ENCODE measurements at regions of chr9 and their contacts with region 1.

Region 1: DNA sequence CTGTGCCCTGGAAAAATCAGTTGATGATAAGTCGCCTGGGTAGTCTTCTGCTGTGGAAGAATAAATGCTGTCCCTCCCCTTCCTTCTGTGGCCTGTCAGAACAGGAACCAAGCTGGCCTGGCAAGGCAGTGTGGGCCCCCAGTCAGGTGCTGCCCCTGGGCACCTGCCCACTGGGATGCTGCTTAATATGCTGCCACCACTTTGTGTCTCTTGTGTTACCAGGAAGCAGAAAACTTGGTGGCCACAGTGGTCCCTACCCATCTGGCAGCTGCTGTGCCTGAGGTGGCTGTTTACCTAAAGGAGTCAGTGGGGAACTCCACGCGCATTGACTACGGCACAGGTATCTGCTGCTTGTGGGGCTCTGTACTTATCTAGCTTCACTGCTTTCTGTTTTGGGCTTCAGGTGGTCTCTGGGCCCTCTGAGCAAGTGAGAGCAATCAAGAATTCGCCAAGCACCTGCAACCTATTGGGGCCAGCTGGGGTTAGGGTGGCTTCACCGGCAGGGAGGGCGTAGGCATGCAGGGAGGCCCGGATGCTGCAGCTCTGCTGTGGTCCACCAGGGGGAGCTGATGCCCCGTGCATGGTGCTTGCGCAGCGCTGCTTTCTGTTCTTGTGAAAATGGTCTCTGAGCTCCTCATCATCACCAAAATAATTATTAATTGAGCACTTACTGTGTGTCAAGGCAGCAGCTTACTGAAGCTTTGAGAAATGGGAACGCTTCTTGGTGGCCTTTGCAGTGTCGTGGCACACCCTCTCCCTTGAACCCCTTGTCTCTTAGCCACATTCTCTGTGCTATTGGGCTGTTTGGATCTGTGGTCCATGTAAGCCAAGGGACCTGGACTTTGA is 20.3 kb downstream of the PTPA start:
- DNase-seq: peak; percentile 81
- H3K4me3 Mint-ChIP-seq: no peak overlapping the region
- H3K27ac Mint-ChIP-seq: no peak overlapping the region
- H3K4me1 Mint-ChIP-seq: no peaks in the 10 kb centered on the region
- H3K27me3 Mint-ChIP-seq: no peaks in the 10 kb centered on the region
- CTCF ChIP-seq: peak; percentile 94

Region 2: GRCh38 chr9:128742401-128742800 is 389.1 kb before region 1 on chr9:
- CTCF ChIA-PET with region 1: no interaction called
- intact Hi-C with region 1: no loop called
- DNase-seq: no peak
- H3K4me3 Mint-ChIP-seq: no peak overlapping the region
- H3K27ac Mint-ChIP-seq: no peak overlapping the region
- H3K4me1 Mint-ChIP-seq: no peaks in the 10 kb centered on the region
- H3K27me3 Mint-ChIP-seq: no peaks in the 10 kb centered on the region
- CTCF ChIP-seq: no peak

Region 3: DNA sequence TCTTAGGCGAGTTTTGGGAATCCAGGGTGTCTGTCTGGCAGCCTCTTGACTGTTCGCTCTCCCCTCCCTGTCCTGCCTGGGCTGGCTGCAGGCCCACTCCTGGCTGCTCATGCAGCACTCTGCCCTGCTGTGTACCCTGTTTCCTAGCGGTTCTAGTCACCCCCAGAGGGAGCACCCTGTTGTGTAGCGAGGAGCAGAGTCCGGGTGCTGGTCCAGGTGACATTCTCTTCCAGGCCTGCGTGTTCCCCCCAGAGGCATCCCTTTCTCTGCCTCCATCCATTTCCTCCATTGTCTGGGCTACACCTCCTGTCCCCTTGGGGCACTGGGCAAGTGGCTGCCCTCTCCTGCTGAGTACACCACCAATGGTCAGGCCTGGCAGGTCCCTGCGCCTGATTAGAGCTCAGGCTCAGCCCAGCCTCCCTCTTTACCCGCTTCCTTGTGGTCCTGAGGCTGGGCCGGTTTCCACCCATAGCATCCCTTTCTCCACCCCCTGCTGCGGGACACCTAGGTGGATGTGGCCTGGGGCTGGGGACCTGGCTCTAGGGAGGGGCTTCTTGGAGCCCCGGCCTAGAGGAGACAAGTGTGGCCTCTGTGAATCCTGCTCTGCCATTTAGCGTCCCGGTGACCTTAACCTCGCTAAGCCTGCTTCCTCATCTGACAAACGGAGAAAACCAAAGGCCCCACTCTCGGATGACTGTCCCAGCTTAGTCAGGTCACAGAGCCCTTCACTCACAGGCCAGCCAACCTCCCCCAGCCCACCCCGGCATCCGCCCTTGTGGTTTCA is 37.9 kb before region 1 on chr9:
- CTCF ChIA-PET with region 1: no interaction called
- intact Hi-C with region 1: no loop called
- DNase-seq: no peak
- H3K4me3 Mint-ChIP-seq: no peak overlapping the region
- H3K27ac Mint-ChIP-seq: no peak overlapping the region
- H3K4me1 Mint-ChIP-seq: no peaks in the 10 kb centered on the region
- H3K27me3 Mint-ChIP-seq: no peaks in the 10 kb centered on the region
- CTCF ChIP-seq: no peak

Region 4: DNA sequence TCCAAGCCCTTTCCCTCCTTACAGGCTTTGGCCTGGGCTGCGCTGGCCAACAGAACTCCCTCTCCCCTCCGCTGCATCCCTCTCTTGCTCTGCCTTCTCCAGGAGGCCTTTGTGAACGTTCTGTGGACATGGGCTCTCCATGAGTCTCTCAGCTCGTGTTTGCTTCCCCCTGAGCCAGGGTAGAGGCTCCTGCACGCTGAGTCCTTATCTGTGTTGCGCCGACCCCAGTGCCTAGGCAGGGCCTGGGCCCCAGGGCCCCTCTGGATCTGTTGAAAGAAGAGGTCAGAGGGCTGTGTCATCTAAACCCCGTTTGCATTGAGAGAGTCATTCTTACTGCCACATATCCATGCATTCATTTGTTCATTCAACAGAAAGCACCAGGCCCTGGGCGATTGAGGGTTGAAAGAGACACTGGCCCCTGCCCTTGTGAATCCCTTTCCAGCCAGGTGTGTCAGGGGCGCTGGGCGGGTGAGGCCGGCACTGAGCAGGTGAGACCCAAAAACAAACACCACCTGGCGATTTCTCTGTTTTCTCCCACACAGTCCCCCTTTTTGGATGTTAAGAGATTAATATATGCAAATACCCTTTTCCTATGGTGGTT is 157.7 kb after region 1 on chr9:
- CTCF ChIA-PET with region 1: no interaction called
- intact Hi-C with region 1: no loop called
- DNase-seq: no peak
- H3K4me3 Mint-ChIP-seq: no peak overlapping the region
- H3K27ac Mint-ChIP-seq: no peak overlapping the region
- H3K4me1 Mint-ChIP-seq: peaks cover 8% of the 10 kb centered on the region
- H3K27me3 Mint-ChIP-seq: no peaks in the 10 kb centered on the region
- CTCF ChIP-seq: no peak

Region 5: GRCh38 chr9:129550199-129550839 is 418.8 kb after region 1 on chr9:
- CTCF ChIA-PET with region 1: no interaction called
- intact Hi-C with region 1: no loop called
- DNase-seq: peak; percentile 51
- H3K4me3 Mint-ChIP-seq: peak overlapping the region; percentile 78
- H3K27ac Mint-ChIP-seq: peak overlapping the region; percentile 90
- H3K4me1 Mint-ChIP-seq: peaks cover 8% of the 10 kb centered on the region
- H3K27me3 Mint-ChIP-seq: no peaks in the 10 kb centered on the region
- CTCF ChIP-seq: no peak

Region 6: DNA sequence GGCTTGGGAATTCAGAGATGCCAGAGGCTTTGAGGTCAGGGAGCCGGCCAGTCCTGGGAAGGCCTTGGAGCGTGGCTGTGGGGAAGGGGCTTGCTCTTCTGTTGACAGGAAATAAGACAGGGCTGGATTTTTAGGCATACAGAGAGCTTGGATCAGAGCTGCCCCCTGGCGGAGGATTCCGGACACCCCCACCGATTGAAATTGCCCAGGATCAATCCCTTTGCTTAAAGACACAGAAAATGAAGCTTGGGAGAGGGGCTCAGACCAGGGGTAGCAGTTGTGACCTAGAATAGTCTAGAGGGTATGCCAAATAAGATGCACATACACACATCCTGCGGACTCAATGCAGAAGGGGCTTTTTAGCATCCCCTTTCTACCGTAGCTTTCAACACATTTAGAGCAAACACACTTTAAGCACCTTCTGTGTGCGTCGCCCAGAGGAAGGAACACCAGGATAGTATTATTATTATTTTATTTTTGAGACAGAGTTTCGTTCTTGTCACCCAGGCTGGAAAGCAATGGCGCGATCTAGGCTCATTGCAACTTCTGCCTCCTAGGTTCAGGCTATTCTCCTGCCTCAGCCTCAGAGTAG is 492.7 kb after region 1 on chr9:
- CTCF ChIA-PET with region 1: interaction called, 22 read pairs
- intact Hi-C with region 1: no loop called
- DNase-seq: peak; percentile 73
- H3K4me3 Mint-ChIP-seq: no peak overlapping the region
- H3K27ac Mint-ChIP-seq: no peak overlapping the region
- H3K4me1 Mint-ChIP-seq: peaks cover 29% of the 10 kb centered on the region
- H3K27me3 Mint-ChIP-seq: no peaks in the 10 kb centered on the region
- CTCF ChIP-seq: peak; percentile 61

Measured in Calu3 (cell line).